AG04449 (cell line): ENCODE measurements at regions of chr2 and their contacts with region 1.

Region 1: GRCh38 chr2:157327621-157328500 is 2.2 kb upstream of the ERMN start:
- DNase-seq: no peak
- H3K4me3 ChIP-seq: no peak overlapping the region
- CTCF ChIP-seq: peak; percentile 92

Region 2: GRCh38 chr2:157245846-157246764 is 81.8 kb before region 1 on chr2:
- CTCF ChIA-PET with region 1: no interaction called
- POLR2A ChIA-PET with region 1: no interaction called
- DNase-seq: peak; percentile 62
- H3K4me3 ChIP-seq: no peak overlapping the region
- CTCF ChIP-seq: no peak

Region 3: DNA sequence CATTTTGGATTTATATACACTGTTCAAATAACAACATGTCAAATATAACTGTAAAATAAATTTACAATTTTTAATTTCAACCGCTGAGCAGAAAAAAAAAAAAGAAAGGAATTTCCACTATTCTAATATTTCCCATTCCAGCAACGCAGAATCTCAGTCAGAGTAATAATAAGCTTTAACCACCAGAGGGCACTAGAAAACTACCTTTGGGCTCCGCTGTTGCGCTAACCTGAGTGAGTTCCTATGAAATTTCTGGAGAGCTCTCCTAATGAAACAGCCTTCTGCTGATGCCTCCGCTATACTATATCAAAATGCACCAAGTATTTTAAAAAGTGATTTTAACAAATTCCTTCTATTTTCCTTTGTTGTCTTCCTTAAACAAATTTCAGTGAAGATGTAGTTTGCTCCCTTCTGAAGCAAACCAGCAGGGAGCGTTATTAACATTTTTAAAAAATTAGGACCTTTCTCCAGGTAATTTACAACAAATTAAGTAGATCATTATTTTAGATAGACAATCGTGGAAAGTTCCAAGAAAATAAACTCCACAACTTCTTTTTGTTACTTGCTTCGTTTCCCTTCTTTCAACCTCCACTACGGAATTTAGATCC is 25.3 kb before region 1 on chr2:
- CTCF ChIA-PET with region 1: interaction called, 370 read pairs
- POLR2A ChIA-PET with region 1: no interaction called
- DNase-seq: no peak
- H3K4me3 ChIP-seq: no peak overlapping the region
- CTCF ChIP-seq: peak; percentile 60

Region 4: DNA sequence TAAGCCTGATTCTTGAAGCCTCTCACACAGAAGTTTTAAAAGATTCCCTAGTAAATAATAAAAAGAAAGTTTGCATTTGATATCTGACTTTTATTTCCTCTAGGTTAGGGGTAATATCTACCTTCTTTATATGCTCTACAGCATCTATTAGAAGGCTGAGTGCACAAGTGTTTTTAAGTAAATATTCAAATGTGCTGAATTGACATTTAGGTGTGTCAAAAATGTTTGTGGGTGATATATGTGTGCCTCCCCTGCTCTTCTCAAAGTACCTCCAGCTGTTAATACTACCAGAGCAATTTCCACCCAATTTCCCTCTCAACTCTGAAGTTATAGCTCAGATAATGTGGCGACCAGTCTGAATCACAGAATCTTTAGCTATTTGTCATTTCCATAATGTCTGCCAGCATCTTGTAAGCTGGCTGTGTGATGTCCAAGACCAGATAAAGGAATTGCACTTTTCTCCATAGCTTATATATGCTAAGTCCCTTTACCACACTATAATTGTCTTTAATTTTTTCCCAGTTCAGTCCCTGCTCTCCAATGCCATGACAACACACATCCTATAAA is 22.2 kb after region 1 on chr2:
- CTCF ChIA-PET with region 1: interaction called, 24 read pairs
- POLR2A ChIA-PET with region 1: no interaction called
- DNase-seq: no peak
- H3K4me3 ChIP-seq: no peak overlapping the region
- CTCF ChIP-seq: no peak

Region 5: GRCh38 chr2:157486596-157487270 is 158.9 kb after region 1 on chr2:
- CTCF ChIA-PET with region 1: interaction called, 56 read pairs
- POLR2A ChIA-PET with region 1: no interaction called
- DNase-seq: no peak
- H3K4me3 ChIP-seq: no peak overlapping the region
- CTCF ChIP-seq: no peak

Region 6: DNA sequence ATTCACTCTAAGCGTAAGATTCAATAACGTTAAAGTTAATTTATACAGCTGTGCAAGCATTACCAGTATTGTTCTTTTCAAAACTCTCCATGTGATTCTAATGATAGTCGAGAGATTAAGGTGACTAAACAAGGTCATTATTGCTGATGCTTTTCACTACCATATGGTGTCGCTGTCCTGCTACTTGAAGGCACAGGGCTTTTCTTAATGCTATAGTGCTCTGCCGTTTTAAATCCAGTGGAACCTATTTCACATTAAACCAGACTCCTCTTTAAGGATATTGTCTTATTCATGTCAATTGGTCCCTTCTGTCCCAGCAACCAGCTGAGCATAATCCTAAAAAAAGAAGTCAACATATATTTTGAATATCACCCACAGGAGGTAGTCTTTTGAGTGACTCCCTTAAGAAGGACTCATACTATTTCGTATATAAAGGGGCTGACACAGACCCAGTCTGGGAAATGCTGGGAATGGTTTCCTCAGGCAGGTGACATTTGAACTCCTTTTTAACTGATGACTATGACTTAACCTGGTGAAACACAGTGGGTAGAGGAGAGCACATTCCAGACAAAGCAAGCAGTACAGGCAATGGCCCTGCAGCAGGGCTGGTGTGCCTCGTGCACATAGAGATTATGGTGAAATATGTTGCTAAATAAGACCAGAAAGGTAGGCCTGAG is 169.9 kb after region 1 on chr2:
- CTCF ChIA-PET with region 1: interaction called, 56 read pairs
- POLR2A ChIA-PET with region 1: no interaction called
- DNase-seq: no peak
- H3K4me3 ChIP-seq: no peak overlapping the region
- CTCF ChIP-seq: peak; percentile 68

Region 7: DNA sequence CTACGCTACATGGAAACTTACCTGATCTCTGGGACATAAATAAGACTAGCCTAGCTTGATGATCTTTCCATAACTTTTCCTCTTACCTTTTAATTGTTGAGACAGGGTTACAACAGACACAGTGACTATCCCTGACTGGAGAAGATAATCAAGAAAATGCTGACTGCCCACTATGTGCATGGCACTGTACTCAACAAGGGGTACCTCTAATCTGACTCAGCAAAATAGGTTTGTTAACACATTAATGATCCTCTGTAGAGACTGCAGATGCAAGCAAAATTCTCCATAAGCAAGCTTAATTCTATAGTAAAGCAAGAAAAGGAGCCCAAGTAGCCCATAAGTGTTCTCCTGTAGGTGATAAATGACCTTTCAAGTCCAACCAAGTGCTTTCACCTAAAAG is 275.3 kb after region 1 on chr2:
- CTCF ChIA-PET with region 1: interaction called, 21 read pairs
- POLR2A ChIA-PET with region 1: no interaction called
- DNase-seq: no peak
- H3K4me3 ChIP-seq: no peak overlapping the region
- CTCF ChIP-seq: no peak